GM10248 (cell line): ENCODE measurements at regions of chr18 and their contacts with region 1.

Region 1: GRCh38 chr18:54173980-54174630 is 50.4 kb downstream of the MBD2 start:
- DNase-seq: no peak
- CTCF ChIP-seq: no peak

Region 2: GRCh38 chr18:54162431-54162830 is 11.7 kb before region 1 on chr18:
- CTCF ChIA-PET with region 1: interaction called, 18 read pairs
- POLR2A ChIA-PET with region 1: no interaction called
- DNase-seq: no peak
- CTCF ChIP-seq: no peak

Region 3: GRCh38 chr18:54254265-54254770 is 80.2 kb after region 1 on chr18:
- CTCF ChIA-PET with region 1: no interaction called
- POLR2A ChIA-PET with region 1: no interaction called
- DNase-seq: no peak
- CTCF ChIP-seq: no peak

Region 4: GRCh38 chr18:54388203-54389142 is 214.4 kb after region 1 on chr18:
- CTCF ChIA-PET with region 1: no interaction called
- POLR2A ChIA-PET with region 1: no interaction called
- DNase-seq: peak; percentile 17
- CTCF ChIP-seq: no peak

Region 5: DNA sequence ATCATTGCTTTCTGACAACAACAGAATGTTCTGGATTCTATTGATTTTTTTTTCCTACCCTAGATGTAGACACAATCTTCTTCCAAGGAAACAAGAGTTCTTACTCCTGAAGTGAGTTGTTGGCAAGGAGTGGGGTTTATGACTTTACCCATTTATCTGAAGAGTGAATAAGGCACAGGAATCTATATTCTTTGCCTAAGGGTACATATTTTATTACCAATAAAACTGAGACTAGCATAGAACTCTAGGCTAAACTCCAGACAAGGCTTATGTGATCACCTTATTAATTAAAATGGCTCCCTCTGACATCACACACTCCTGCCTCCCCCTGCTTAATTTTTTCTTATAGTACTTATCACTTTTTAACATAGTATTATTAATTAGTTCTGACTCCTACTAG is 231.2 kb after region 1 on chr18:
- CTCF ChIA-PET with region 1: no interaction called
- POLR2A ChIA-PET with region 1: no interaction called
- DNase-seq: no peak
- CTCF ChIP-seq: no peak